ENCODE measurements at regions of chr16 and their contacts with region 1.

Region 1: DNA sequence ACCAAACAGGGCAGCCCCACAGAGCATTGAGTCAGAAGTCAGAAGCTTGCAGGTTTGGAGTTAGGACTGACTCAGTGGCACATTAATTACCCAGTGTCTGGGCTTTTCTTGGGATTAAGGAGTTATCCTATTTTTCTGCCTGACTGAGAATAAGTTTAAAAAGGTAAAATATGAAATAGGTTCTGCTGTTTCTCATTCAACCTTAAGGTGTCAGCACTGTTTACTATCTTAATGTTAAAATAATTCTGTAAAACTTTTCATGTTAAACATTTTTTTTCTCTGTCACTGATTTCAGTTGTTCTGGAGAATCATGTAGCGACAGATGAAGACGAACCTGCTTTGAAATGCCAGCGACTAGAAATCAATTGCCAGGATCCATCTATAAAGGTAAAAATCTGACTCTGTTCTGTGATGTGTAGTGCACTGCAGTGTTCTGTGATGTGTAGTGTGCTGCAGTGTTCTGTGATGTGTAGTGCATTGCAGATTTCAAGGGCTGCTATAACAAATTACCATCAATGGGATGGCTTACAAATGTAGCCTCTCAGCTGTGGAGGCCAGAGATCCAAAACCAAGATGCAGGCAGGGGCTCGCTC is 128.0 kb downstream of the LAT start:
- DNase-seq: no peak
- H3K4me3 ChIP-seq: no peak overlapping the region
- H3K27ac ChIP-seq: no peak overlapping the region
- H3K4me1 ChIP-seq: peaks cover 5 to 24% (median 20%) of the 10 kb centered on the region in 4 donors
- H3K27me3 ChIP-seq: no peaks in the 10 kb centered on the region
- CTCF ChIP-seq: no peak
- EP300 ChIP-seq: no peak
- POLR2A ChIP-seq: no peak

Region 2: DNA sequence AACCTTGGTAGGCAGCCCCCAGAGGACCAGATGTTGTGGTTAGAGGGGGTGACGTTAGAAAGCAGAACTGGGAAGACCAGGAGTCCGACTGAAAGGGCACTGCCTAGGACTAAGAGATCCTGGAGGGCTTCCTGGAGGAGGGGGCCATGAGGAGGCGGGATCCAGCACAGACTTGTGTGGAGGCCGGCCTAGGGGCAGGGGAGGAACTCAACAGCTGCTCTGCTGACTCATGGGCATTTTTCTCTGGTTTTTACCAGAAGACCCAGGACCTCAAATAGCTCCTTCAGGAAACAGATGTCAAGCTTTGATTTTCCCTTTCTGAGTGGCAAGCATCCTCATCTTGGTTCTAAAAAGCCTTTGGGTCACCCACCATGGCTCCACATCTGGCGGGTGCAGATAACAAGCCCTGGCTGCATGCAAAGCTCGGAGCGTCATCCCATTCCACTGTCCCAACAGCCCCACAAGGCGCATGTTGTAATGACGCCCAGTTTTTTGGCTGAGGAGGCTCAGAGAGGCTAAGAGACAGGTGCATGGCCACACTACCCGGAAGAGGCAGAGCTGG is 1681.8 kb before region 1 on chr16:
- intact Hi-C with region 1: no loop called
- DNase-seq: peak; percentile 64
- H3K4me3 ChIP-seq: no peak overlapping the region
- H3K27ac ChIP-seq: no peak overlapping the region
- H3K4me1 ChIP-seq: no peaks in the 10 kb centered on the region
- H3K27me3 ChIP-seq: peaks cover 0 to 61% (median 0%) of the 10 kb centered on the region in 4 donors
- CTCF ChIP-seq: no peak
- EP300 ChIP-seq: no peak
- POLR2A ChIP-seq: no peak

Region 3: DNA sequence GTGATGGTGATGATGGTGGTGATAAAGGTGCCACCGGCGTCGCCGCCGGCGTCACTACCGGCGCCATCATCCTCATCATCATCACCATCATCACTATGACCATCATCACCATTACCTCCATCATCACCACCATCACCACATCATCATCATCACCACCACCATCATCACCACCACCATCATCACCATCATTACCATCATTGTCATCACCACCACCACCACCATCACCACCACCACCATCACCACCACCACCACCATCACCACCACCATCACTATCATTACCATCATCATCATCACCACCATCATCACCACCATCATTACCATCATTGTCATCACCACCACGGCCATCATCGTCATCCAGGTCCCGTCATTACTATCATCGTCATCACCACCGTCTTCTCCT is 113.9 kb after region 1 on chr16:
- intact Hi-C with region 1: loop called (anchors 10 kb)
- DNase-seq: no peak
- H3K4me3 ChIP-seq: no peak overlapping the region
- H3K27ac ChIP-seq: no peak overlapping the region
- H3K4me1 ChIP-seq: peaks cover 0 to 32% (median 25%) of the 10 kb centered on the region in 4 donors
- H3K27me3 ChIP-seq: no peaks in the 10 kb centered on the region
- CTCF ChIP-seq: no peak
- EP300 ChIP-seq: no peak
- POLR2A ChIP-seq: no peak